ENCODE measurements at regions of chr3 and their contacts with region 1.

Region 1: GRCh38 chr3:101849051-101849720 is at the start of gene NFKBIZ:
- DNase-seq: peak; percentile 98
- H3K4me3 ChIP-seq: peak within 1 kb of the TSS; percentile 69 to 95 (median 92)
- H3K27ac ChIP-seq: peak within 1 kb of the TSS; percentile 94 to 99 (median 98)
- H3K4me1 ChIP-seq: peaks cover 0 to 40% (median 27%) of the 10 kb centered on the region in 4 donors
- H3K27me3 ChIP-seq: no peaks in the 10 kb centered on the region
- CTCF ChIP-seq: no peak
- EP300 ChIP-seq: peak in 2 of 4 donors; percentile 50 to 66
- POLR2A ChIP-seq: peak; percentile 8 to 66
- total RNA-seq, gene NFKBIZ: 49.9 to 121 (median 58.1) TPM

Region 2: DNA sequence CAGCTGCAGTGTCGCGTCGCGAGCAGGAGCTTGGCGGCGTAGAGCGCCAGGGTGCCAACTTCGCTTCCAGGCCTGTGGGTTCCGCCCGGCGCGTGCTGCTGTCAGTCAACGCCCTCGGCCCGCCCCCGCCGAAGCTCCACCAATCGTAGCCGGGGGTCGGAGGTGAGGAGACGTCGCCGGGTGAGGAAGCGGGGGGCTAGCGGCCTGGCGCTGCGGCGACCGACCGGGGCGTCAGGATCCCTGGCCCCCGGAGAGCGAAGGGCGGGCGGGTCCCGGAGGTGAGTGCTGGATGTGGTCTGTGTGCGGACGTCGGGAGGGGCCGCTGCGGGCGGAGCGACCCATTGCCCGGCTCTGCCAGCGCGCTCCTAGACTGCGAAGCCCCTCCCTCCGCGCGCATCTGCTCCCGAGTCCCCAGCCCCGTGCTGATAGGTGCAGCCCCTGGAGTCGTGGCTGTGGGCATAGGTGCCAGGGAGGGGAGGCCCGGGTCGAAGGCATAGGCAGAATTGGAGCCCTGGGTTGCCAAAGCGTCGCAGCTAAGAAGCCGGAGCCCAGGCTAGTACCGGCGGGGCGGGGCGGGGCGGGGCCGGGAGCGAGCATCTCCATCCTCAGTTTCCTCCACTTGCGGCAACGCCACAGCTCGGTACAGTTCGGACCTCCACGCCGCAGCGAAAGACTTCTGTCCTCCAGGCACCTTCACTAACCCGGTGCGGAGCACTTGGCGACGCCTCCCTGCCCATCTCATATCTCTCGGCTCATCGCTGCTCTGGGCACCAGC is 70.0 kb before region 1 on chr3 and contains the start of gene NXPE3:
- intact Hi-C with region 1: loop called (anchors 2 kb)
- DNase-seq: peak; percentile 96
- H3K4me3 ChIP-seq: peak within 1 kb of the TSS; percentile 69 to 90 (median 87)
- H3K27ac ChIP-seq: peak within 1 kb of the TSS; percentile 85 to 93 (median 92)
- H3K4me1 ChIP-seq: peaks cover 0 to 34% (median 24%) of the 10 kb centered on the region in 4 donors
- H3K27me3 ChIP-seq: no peaks in the 10 kb centered on the region
- CTCF ChIP-seq: no peak
- EP300 ChIP-seq: no peak
- POLR2A ChIP-seq: no peak
- total RNA-seq, gene NXPE3: 11.5 to 15.8 (median 13.2) TPM

Region 3: GRCh38 chr3:101888653-101889052 is 39.5 kb after region 1 on chr3:
- intact Hi-C with region 1: loop called (anchors 2 kb)
- DNase-seq: peak; percentile 87
- H3K4me3 ChIP-seq: no peak overlapping the region
- H3K27ac ChIP-seq: peak overlapping the region in 3 of 4 donors; percentile 55 to 62 (median 60)
- H3K4me1 ChIP-seq: peaks cover 0 to 22% (median 16%) of the 10 kb centered on the region in 4 donors
- H3K27me3 ChIP-seq: no peaks in the 10 kb centered on the region
- CTCF ChIP-seq: no peak
- EP300 ChIP-seq: peak in 3 of 4 donors; percentile 4 to 21 (median 7)
- POLR2A ChIP-seq: no peak

Region 4: GRCh38 chr3:102129760-102130608 is 280.8 kb after region 1 on chr3:
- intact Hi-C with region 1: loop called (anchors 1 kb)
- DNase-seq: peak; percentile 90
- H3K4me3 ChIP-seq: no peak overlapping the region
- H3K27ac ChIP-seq: peak overlapping the region; percentile 81 to 92 (median 84)
- H3K4me1 ChIP-seq: peaks cover 0 to 33% (median 23%) of the 10 kb centered on the region in 4 donors
- H3K27me3 ChIP-seq: no peaks in the 10 kb centered on the region
- CTCF ChIP-seq: no peak
- EP300 ChIP-seq: peak; percentile 97 to 99 (median 98)
- POLR2A ChIP-seq: no peak